Activated CD4-positive, alpha-beta T cell treated with anti-CD3 and anti-CD28 coated beads for 36 hours (primary cell): ENCODE measurements at regions of chr11 and their contacts with region 1.

Region 1: GRCh38 chr11:72814286-72815109 is at the start of gene ATG16L2:
- DNase-seq: peak; percentile 94
- ATAC-seq: peak; percentile 65
- H3K4me3 Mint-ChIP-seq: peak within 1 kb of the TSS; percentile 91
- H3K27ac Mint-ChIP-seq: peak within 1 kb of the TSS; percentile 98
- H3K4me1 Mint-ChIP-seq: peaks cover 30% of the 10 kb centered on the region
- H3K27me3 Mint-ChIP-seq: no peaks in the 10 kb centered on the region
- total RNA-seq, gene ATG16L2: 55.3 to 59.4 TPM

Region 2: DNA sequence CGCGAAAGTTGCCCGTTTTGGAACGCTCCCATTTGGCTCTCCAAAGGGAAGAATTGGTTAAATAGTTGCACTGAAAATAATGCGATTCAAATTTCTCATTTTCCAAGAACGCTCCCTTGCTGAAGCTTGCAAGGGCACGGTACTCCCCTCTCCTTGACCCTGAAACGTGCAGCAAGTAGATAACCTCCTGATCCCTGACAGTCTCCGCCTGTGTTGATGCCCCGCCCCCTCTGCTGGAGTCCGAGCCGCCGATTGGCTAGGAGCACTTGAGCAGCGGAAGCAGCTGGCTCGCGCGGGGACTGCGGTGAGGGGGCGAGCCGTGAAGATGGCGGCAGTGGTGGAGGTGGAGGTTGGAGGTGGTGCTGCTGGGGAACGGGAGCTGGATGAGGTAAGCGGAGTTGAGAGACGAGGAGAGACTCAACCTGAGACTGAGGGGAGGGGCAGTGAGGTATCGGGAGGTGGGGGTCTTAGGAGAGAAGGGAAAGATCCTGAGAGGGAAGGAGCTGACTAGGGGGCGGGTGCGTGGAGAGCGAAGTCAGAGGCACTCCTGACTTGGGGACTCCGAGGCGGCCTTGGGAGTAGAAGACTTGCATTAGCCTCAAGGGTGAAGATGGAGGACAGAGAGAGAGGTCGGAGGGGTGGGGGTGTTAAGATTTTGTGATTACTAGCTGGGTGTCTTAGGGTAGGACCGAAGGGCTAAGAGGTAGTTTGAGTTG is 885.6 kb before region 1 on chr11 and contains the start of gene RNF121:
- CTCF ChIA-PET with region 1: no interaction called
- POLR2A ChIA-PET with region 1: no interaction called
- intact Hi-C with region 1: loop called in 1 of 2 experiments (anchors 1 kb)
- DNase-seq: peak; percentile 99
- ATAC-seq: peak; percentile 87
- H3K4me3 Mint-ChIP-seq: peak within 1 kb of the TSS; percentile 96
- H3K27ac Mint-ChIP-seq: peak within 1 kb of the TSS; percentile 100
- H3K4me1 Mint-ChIP-seq: peaks cover 50% of the 10 kb centered on the region
- H3K27me3 Mint-ChIP-seq: no peaks in the 10 kb centered on the region
- total RNA-seq, gene RNF121: 28.7 to 29.5 TPM

Region 3: GRCh38 chr11:72222907-72223614 is 591.4 kb before region 1 on chr11:
- CTCF ChIA-PET with region 1: no interaction called
- POLR2A ChIA-PET with region 1: no interaction called
- intact Hi-C with region 1: loop called in 1 of 2 experiments (anchors 2 kb)
- DNase-seq: peak; percentile 96
- ATAC-seq: peak; percentile 80
- H3K4me3 Mint-ChIP-seq: peak overlapping the region; percentile 96
- H3K27ac Mint-ChIP-seq: peak overlapping the region; percentile 80
- H3K4me1 Mint-ChIP-seq: peaks cover 16% of the 10 kb centered on the region
- H3K27me3 Mint-ChIP-seq: peaks cover 3% of the 10 kb centered on the region

Region 4: GRCh38 chr11:72652873-72653630 is 161.4 kb before region 1 on chr11:
- CTCF ChIA-PET with region 1: no interaction called
- POLR2A ChIA-PET with region 1: no interaction called
- intact Hi-C with region 1: no loop called
- DNase-seq: no peak
- ATAC-seq: no peak
- H3K4me3 Mint-ChIP-seq: no peak overlapping the region
- H3K27ac Mint-ChIP-seq: no peak overlapping the region
- H3K4me1 Mint-ChIP-seq: no peaks in the 10 kb centered on the region
- H3K27me3 Mint-ChIP-seq: no peaks in the 10 kb centered on the region

Region 5: GRCh38 chr11:72722050-72722748 is 92.3 kb before region 1 on chr11:
- CTCF ChIA-PET with region 1: interaction called, 20 read pairs
- POLR2A ChIA-PET with region 1: interaction called, 16 read pairs
- intact Hi-C with region 1: loop called (anchors 1 to 2 kb)
- DNase-seq: peak; percentile 89
- ATAC-seq: peak; percentile 91
- H3K4me3 Mint-ChIP-seq: peak overlapping the region; percentile 92
- H3K27ac Mint-ChIP-seq: peak overlapping the region; percentile 96
- H3K4me1 Mint-ChIP-seq: peaks cover 48% of the 10 kb centered on the region
- H3K27me3 Mint-ChIP-seq: no peaks in the 10 kb centered on the region

Region 6: GRCh38 chr11:72781313-72782050 is 33.0 kb before region 1 on chr11:
- CTCF ChIA-PET with region 1: interaction called, 6 read pairs
- POLR2A ChIA-PET with region 1: interaction called, 3 read pairs
- intact Hi-C with region 1: loop called in 1 of 2 experiments (anchors 1 kb)
- DNase-seq: peak; percentile 69
- ATAC-seq: peak; percentile 71
- H3K4me3 Mint-ChIP-seq: peak overlapping the region; percentile 62
- H3K27ac Mint-ChIP-seq: no peak overlapping the region
- H3K4me1 Mint-ChIP-seq: peaks cover 16% of the 10 kb centered on the region
- H3K27me3 Mint-ChIP-seq: no peaks in the 10 kb centered on the region

Region 7: GRCh38 chr11:72848846-72849466 is 34.5 kb after region 1 on chr11:
- CTCF ChIA-PET with region 1: no interaction called
- POLR2A ChIA-PET with region 1: no interaction called
- intact Hi-C with region 1: no loop called
- DNase-seq: peak; percentile 62
- ATAC-seq: peak; percentile 71
- H3K4me3 Mint-ChIP-seq: no peak overlapping the region
- H3K27ac Mint-ChIP-seq: no peak overlapping the region
- H3K4me1 Mint-ChIP-seq: peaks cover 3% of the 10 kb centered on the region
- H3K27me3 Mint-ChIP-seq: no peaks in the 10 kb centered on the region

Region 8: GRCh38 chr11:73141848-73142286 is 327.4 kb after region 1 on chr11:
- CTCF ChIA-PET with region 1: interaction called, 4 read pairs
- POLR2A ChIA-PET with region 1: interaction called, 4 read pairs
- intact Hi-C with region 1: loop called (anchors 1 kb)
- DNase-seq: peak; percentile 73
- ATAC-seq: peak; percentile 17
- H3K4me3 Mint-ChIP-seq: peak overlapping the region; percentile 92
- H3K27ac Mint-ChIP-seq: peak overlapping the region; percentile 82
- H3K4me1 Mint-ChIP-seq: peaks cover 40% of the 10 kb centered on the region
- H3K27me3 Mint-ChIP-seq: no peaks in the 10 kb centered on the region

Region 9: GRCh38 chr11:73876424-73877300 is 1062.2 kb after region 1 on chr11 and contains the starts of genes COA4 and PAAF1:
- CTCF ChIA-PET with region 1: no interaction called
- POLR2A ChIA-PET with region 1: no interaction called
- intact Hi-C with region 1: loop called in 1 of 2 experiments (anchors 5 kb)
- DNase-seq: peak; percentile 97
- ATAC-seq: peak; percentile 95
- H3K4me3 Mint-ChIP-seq: peak within 1 kb of the TSS; percentile 93
- H3K27ac Mint-ChIP-seq: peak within 1 kb of the TSS; percentile 100
- H3K4me1 Mint-ChIP-seq: peaks cover 32% of the 10 kb centered on the region
- H3K27me3 Mint-ChIP-seq: no peaks in the 10 kb centered on the region
- total RNA-seq, gene COA4: 103 to 112 TPM
- total RNA-seq, gene PAAF1: 34.2 to 34.8 TPM